Posterior vena cava (tissue), 2 donors: ENCODE measurements at regions of chr14 and their contacts with region 1.

Region 1: GRCh38 chr14:74913986-74914573 is 9.0 kb downstream of the RPS6KL1 start:
- DNase-seq: no peak

Region 2: DNA sequence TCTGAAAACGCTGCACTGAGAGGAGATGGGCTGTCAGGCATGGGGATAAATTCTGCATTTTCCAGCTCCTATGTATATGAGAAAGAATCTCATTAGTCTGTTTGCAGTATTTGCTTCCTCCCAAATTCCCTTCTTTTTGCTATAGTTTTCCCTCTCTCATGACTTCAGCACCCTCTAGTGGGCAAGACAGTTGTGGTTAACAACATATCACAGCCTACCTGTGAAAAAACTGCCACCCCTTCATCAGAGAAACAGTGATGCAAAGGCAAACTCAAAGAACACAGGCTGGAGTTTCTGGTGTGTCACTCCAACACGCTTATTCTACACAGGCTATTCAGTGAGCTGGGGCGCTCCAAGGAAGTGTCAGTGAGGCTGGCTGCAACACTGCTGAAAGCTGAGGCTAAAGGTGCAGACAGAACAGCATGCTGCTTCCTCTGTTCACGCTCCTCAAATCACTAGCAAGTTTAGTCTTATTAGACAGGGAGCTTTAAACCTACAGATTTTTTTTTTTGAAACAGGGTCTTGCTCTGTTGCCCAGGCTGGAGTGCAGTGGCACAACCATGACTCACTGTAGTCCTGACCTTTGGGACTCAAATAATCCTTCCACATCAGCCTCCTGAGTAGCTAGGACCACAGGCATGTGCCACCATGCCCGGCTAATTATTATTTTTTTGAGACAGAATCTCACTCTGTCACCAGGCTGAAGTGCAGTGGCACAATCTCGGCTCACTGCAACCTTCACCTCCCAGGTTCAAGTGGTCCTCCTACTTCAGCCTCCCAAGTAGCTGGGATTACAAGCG is 174.7 kb after region 1 on chr14:
- intact Hi-C with region 1: loop called in 1 of 2 experiments (anchors 5 kb)
- DNase-seq: no peak